Activated CD8-positive, alpha-beta T cell treated with anti-CD3 and anti-CD28 coated beads for 36 hours (primary cell): ENCODE measurements at regions of chr1 and their contacts with region 1.

Region 1: DNA sequence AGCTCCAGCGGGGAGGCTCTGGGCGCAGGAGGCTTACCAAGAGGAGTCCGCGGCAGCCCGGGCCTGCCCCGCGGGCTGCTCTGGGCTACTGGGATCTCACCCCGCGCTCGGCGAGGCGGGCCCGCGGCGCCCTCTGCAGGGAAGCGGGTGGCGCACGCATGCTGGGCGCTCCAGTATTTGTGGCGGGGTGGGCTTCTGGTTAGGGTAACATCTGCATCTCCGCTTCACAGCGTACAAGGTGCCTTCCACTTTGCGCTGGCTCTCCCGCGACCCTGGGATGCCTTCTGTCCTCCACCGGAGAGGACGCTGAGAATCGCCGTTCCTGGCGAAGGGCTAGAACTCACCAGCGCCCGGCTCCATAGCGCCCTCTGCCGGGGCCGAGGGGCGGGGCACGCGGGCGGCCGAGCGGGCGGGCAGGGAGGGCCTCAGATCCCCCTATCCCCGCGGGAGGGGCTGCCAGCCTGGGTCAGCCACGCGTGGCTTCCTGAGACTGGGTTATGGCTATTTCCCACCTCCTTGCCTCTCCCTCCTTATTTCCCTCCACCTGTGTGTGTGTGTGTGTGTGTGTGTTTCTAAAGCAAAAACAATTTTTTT is 46.6 kb upstream of the CTBS start:
- DNase-seq: peak; percentile 84
- ATAC-seq: peak; percentile 92
- H3K4me3 Mint-ChIP-seq: peak overlapping the region; percentile 83
- H3K27ac Mint-ChIP-seq: peak overlapping the region; percentile 94
- H3K4me1 Mint-ChIP-seq: peaks cover 21% of the 10 kb centered on the region
- H3K27me3 Mint-ChIP-seq: no peaks in the 10 kb centered on the region
- CTCF ChIP-seq: peak; percentile 100

Region 2: GRCh38 chr1:84143796-84144565 is 476.8 kb before region 1 on chr1 and contains the start of gene PRKACB:
- CTCF ChIA-PET with region 1: interaction called, 16 read pairs
- POLR2A ChIA-PET with region 1: interaction called, 3 read pairs
- intact Hi-C with region 1: loop called (anchors 5 kb)
- DNase-seq: no peak
- ATAC-seq: peak; percentile 89
- H3K4me3 Mint-ChIP-seq: peak within 1 kb of the TSS; percentile 83
- H3K27ac Mint-ChIP-seq: peak within 1 kb of the TSS; percentile 99
- H3K4me1 Mint-ChIP-seq: peaks cover 30% of the 10 kb centered on the region
- H3K27me3 Mint-ChIP-seq: no peaks in the 10 kb centered on the region
- CTCF ChIP-seq: no peak
- total RNA-seq, gene PRKACB: 39.9 to 44.7 TPM

Region 3: GRCh38 chr1:84442256-84442655 is 178.6 kb before region 1 on chr1:
- CTCF ChIA-PET with region 1: interaction called, 29 read pairs
- POLR2A ChIA-PET with region 1: interaction called, 3 read pairs
- intact Hi-C with region 1: loop called (anchors 2 kb)
- DNase-seq: no peak
- ATAC-seq: peak; percentile 94
- H3K4me3 Mint-ChIP-seq: no peak overlapping the region
- H3K27ac Mint-ChIP-seq: peak overlapping the region; percentile 26
- H3K4me1 Mint-ChIP-seq: peaks cover 12% of the 10 kb centered on the region
- H3K27me3 Mint-ChIP-seq: peaks cover 3% of the 10 kb centered on the region
- CTCF ChIP-seq: peak; percentile 80

Region 4: GRCh38 chr1:84506002-84506728 is 114.7 kb before region 1 on chr1 and contains the starts of genes GNG5 and SPATA1:
- CTCF ChIA-PET with region 1: interaction called, 12 read pairs
- POLR2A ChIA-PET with region 1: interaction called, 3 read pairs
- intact Hi-C with region 1: no loop called
- DNase-seq: peak; percentile 99
- ATAC-seq: peak; percentile 90
- H3K4me3 Mint-ChIP-seq: peak within 1 kb of the TSS; percentile 99
- H3K27ac Mint-ChIP-seq: peak within 1 kb of the TSS; percentile 99
- H3K4me1 Mint-ChIP-seq: peaks cover 27% of the 10 kb centered on the region
- H3K27me3 Mint-ChIP-seq: no peaks in the 10 kb centered on the region
- CTCF ChIP-seq: no peak
- total RNA-seq, gene GNG5: 101 to 106 TPM
- total RNA-seq, gene SPATA1: 2.5 to 3.0 TPM

Region 5: GRCh38 chr1:84582802-84583587 is 37.8 kb before region 1 on chr1:
- CTCF ChIA-PET with region 1: interaction called, 11 read pairs
- POLR2A ChIA-PET with region 1: no interaction called
- intact Hi-C with region 1: no loop called
- DNase-seq: no peak
- ATAC-seq: no peak
- H3K4me3 Mint-ChIP-seq: no peak overlapping the region
- H3K27ac Mint-ChIP-seq: no peak overlapping the region
- H3K4me1 Mint-ChIP-seq: no peaks in the 10 kb centered on the region
- H3K27me3 Mint-ChIP-seq: no peaks in the 10 kb centered on the region
- CTCF ChIP-seq: no peak

Region 6: DNA sequence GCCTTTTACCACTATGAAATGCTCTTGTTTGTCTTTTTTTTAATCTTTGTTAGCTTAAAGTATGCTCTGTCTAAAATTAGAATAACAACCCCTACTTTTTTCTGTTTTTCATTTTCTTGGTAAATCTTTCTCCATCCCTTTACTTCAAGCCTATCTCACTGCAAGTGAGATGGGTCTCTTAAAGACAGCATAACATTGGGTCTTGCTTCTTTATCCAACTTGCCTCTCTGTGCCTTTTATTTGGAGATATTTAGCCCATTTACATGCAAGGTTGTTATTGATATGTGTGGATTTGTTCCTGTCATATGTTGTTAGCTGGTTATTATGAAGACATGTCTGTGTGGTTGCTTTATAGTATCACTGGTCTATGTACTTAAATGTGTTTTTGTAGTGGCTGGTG is 110.7 kb after region 1 on chr1:
- CTCF ChIA-PET with region 1: no interaction called
- POLR2A ChIA-PET with region 1: no interaction called
- intact Hi-C with region 1: no loop called
- DNase-seq: no peak
- ATAC-seq: no peak
- H3K4me3 Mint-ChIP-seq: no peak overlapping the region
- H3K27ac Mint-ChIP-seq: no peak overlapping the region
- H3K4me1 Mint-ChIP-seq: no peaks in the 10 kb centered on the region
- H3K27me3 Mint-ChIP-seq: peaks cover 10% of the 10 kb centered on the region
- CTCF ChIP-seq: no peak

Region 7: DNA sequence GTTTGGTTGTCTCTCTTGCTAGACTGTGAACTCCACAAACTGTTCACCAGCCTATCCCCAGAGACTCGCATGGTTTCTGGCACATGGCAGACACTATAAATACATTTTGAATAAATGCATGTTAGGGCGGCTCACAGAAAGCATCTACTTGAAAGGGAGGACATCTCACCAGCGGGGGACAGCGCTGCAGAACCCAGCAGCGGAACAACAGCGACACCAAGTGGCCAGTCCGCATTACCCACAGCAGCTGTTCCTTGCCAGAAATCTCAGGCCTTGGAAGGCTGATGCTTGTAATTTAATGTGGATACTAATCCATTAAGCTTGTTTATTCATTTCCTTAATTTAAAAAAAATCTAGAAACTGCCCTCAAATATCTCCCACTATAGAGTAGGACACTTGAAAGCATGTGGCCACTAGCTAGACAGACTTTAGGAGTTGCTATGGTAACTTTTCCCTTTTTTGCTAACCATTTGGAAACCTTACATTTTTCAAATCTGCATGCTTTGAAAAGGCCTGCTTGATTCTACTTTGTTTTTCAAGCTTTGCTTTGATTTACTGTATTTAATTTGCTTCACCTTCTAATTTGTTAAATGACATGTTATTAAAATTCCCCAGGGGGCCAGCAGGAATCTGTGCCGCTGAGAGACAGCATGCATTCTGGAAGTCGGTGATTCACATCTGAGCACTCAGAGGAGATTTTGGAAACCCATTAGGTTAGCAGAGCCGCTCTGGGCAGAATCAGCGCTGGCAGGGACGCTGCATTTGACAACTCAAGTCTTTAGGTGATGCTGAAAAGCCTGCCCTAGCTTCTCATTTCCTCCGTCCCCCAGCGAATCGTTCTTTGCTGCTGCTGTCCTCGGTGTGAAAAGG is 132.9 kb after region 1 on chr1:
- CTCF ChIA-PET with region 1: interaction called, 22 read pairs
- POLR2A ChIA-PET with region 1: no interaction called
- intact Hi-C with region 1: loop called (anchors 5 kb)
- DNase-seq: peak; percentile 78
- ATAC-seq: peak; percentile 93
- H3K4me3 Mint-ChIP-seq: no peak overlapping the region
- H3K27ac Mint-ChIP-seq: no peak overlapping the region
- H3K4me1 Mint-ChIP-seq: peaks cover 8% of the 10 kb centered on the region
- H3K27me3 Mint-ChIP-seq: peaks cover 6% of the 10 kb centered on the region
- CTCF ChIP-seq: peak; percentile 98